ENCODE measurements at regions of chr1 and their contacts with region 1.

Region 1: DNA sequence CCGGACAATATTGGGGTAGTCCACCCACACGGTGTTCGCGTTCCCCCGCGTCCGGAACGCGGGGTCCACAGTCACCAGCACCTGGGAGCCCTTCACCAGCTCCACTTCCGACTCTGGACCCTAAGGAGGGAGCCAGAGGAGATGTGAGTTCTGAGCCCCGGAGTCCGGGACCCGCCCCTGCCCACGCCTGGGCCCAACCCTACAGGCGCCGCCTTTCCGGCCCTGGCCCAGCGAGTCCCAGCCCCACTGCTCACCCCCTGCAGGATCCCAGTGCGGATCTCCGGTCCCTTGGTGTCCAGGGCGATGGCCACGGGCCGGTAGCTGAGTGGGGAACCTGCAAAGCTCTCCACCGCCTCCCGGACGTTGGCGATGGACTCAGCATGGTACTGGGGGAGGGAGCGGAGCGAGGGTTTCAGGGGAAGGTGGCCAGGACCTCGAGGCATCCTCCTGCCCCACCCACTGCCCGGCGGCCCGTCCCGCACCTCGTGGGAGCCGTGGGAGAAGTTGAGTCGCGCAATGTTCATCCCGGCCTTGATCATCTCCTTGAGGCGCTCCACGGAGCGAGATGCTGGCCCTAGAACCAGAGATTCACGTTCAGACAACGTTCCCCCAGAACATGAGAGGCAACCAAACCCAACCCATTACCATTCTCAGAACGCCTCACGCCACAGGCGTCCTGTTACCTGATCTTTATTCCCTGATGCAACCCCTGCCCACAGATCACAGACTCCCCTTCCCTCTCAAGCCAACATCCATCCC is 5.9 kb downstream of the PKLR start:
- DNase-seq: peak in 1 of 2 experiments; percentile 87
- H3K4me3 ChIP-seq: peak overlapping the region; percentile 52 to 89 (median 84)
- H3K27ac ChIP-seq: no peak overlapping the region
- H3K4me1 ChIP-seq: peaks cover 3 to 23% (median 10%) of the 10 kb centered on the region in 4 experiments; a peak in 6 of 7 replicates
- H3K27me3 ChIP-seq: peaks cover 0 to 23% (median 14%) of the 10 kb centered on the region in 4 experiments; a peak in 5 of 7 replicates
- CTCF ChIP-seq: no peak
- EP300 ChIP-seq: no peak
- POLR2A ChIP-seq: no peak
- RAD21 ChIP-seq: no peak

Region 2: GRCh38 chr1:155282488-155283091 is 12.8 kb before region 1 on chr1:
- CTCF ChIA-PET with region 1: interaction called, 22 read pairs
- POLR2A ChIA-PET with region 1: interaction called, 10 read pairs
- DNase-seq: no peak
- H3K4me3 ChIP-seq: no peak overlapping the region
- H3K27ac ChIP-seq: no peak overlapping the region
- H3K4me1 ChIP-seq: peaks cover 9 to 10% (median 10%) of the 10 kb centered on the region in 4 experiments
- H3K27me3 ChIP-seq: no peaks in the 10 kb centered on the region
- CTCF ChIP-seq: no peak
- EP300 ChIP-seq: no peak
- POLR2A ChIP-seq: no peak
- RAD21 ChIP-seq: no peak

Region 3: DNA sequence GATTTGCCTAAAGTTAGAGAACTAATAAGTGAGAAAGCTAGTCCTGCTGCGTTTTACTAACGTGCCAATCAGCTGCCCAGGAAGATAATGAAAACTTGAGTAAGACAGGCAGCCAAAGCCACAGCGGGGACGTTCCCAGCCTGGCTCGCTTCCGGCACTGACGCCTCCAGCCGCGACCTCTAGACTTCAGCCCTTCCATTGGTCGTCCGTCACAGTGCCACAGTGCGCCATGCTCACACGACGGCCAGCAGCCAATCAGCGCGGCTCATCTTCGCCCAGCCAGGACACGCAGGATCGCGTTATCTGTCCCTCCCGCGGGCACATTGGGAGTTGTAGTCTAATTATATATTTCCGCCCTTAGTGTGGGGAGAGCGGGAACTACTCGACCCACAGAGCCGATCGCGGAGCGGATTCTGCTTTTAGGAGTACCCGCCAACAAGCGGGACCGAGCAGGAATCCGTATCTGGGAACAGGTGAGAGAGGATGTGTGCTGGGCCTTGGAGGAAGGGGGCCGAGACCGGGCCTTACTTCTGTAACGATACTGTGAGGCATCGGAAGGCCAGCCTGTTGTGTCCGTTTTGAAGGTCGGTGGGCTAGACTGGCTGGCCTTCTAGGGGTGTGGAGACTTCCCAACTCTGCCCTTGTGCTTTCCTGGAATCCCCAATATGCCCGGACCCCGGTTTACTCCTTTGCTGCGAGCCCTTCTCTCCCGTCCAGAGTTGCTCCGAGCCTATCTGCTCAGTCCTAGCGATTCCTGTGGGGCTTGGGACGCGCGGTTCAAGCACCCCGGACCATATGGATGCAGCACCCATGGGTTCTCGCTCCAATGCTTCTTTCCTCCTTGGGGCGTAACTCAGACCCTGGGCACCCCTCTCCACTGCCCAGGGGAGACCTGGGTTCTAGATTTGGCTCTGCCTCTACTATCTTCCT is 13.4 kb after region 1 on chr1 and contains the start of gene FDPS:
- CTCF ChIA-PET with region 1: interaction called, 37 read pairs
- POLR2A ChIA-PET with region 1: interaction called, 9 read pairs
- DNase-seq: peak; percentile 89 to 97
- H3K4me3 ChIP-seq: peak within 1 kb of the TSS; percentile 79 to 100 (median 89)
- H3K27ac ChIP-seq: peak within 1 kb of the TSS; percentile 65
- H3K4me1 ChIP-seq: peaks cover 0 to 8% (median 4%) of the 10 kb centered on the region in 4 experiments; a peak in 6 of 7 replicates
- H3K27me3 ChIP-seq: no peaks in the 10 kb centered on the region; a peak in 1 of 7 replicates
- CTCF ChIP-seq: 0 out of 4 replicates have a peak, but pooled peaks of 1 of the 3 experiments have one; percentile 7
- EP300 ChIP-seq: no peak
- POLR2A ChIP-seq: peak; percentile 85 to 91
- RAD21 ChIP-seq: 0 out of 4 replicates have a peak, but pooled peaks of 1 of the 2 experiments have one; percentile 6
- total RNA-seq, gene FDPS: 368 and 370 TPM in 2 replicates